ENCODE measurements at regions of chr2 and their contacts with region 1.

Region 1: DNA sequence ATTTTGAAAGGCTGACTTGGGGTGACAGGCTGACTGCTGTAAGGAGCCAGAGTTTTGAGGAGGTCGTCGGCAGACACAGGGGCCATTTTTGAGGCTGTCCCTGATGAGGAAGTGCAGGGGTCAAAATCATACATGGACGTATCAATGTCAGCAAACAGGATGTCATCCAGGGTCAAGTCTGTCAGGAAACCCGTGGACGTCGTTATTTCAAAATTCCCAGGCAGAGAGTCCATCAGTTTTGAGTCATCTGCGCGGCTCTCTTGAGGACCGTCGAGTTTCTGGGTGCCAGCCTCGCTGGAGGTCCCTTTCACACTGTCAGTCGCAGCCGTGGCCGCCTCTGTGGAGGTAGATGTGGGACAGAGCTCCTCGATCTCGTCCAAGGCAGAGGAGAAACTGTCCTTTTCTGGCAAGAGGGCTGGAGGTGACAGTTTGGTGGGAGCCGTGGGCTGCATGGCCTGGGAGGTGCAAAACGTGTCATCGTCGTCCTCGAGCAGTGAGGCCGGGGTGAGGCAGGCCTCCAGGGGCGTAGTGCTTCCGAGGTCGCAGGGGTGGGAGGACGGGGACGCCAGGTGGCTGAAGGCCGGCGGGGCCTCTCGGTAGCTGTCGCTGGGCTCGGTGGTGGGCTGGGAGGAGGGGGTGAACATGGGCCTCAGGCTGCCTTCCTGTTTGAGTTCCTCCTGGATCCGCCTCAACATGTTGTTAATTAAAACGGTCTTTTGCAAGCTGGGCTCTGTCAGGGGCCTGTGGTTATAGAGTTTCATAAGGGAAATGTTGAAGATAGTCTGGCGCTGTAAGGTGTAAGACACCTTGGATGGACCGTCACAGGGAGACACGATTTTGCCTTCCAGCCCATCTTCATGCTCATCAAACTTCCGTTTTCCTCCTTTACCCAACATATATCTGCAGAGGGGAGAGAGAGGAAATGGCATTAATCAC is 17.5 kb downstream of the SERTAD2 start:
- DNase-seq: peak; percentile 67
- CTCF ChIP-seq: peak; percentile 15

Region 2: DNA sequence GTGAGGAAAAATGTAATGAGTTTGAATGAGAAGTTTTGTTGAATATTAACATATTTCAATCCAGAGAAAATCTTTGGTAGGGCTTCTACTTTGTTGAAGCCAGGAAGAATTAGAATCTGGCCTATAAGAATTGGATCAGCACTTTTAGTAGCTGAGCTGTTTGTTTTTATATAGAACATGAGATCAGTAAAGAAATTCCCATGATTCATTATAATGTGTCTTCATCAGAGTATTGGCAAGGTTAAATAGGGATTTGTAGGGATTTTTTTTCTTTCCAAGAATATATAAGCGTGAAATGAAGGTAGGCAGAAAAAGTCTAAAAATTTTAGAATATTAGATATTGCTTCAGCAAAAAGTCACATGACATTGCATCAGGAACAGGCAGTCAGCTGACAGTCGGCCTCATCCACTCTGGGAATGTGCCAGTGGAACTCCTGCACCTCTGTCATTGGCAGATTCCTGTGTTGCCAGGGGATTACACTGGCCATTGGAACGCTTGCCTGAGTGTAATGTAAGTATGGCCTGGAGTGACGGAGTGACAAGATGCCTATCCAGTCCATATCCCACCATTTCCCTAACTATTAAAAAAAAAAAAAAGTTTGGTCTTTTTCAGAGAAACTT is 43.1 kb before region 1 on chr2:
- CTCF ChIA-PET with region 1: no interaction called
- POLR2A ChIA-PET with region 1: no interaction called
- DNase-seq: no peak
- CTCF ChIP-seq: no peak

Region 3: DNA sequence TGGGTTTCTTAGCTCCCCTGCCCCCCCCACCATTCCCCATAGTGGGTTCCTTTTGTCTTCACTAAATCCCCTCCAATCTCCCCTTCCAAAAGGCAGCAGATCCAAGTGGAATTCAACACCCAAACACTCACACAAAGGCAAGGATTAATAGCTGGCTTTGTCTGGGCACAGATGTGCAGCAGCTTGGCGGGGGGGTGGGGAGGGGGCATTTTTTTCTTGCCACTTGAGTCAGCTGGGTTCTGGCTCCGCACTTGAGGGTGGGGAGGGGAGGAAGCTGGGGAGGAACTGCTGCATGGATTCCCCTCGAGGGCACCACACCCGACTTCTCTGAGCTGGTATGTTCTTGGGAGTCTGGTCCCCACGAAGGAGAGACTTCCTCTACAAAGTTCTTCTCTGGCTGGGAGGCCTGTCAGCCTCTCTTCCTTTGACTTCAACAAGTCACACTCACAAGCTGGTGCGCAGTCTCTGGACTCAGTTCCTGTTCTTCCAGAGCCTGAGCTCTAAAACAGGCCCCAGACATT is 18.6 kb before region 1 on chr2:
- CTCF ChIA-PET with region 1: interaction called, 72 read pairs
- POLR2A ChIA-PET with region 1: interaction called, 6 read pairs
- DNase-seq: no peak
- CTCF ChIP-seq: no peak